Pancreas (tissue), 10 donors: ENCODE measurements at regions of chr10 and their contacts with region 1.

Region 1: GRCh38 chr10:124000792-124001201 is 92.6 kb downstream of the CHST15 start:
- DNase-seq: peak in 1 of 6 donors; percentile 7
- ATAC-seq: no peak
- H3K4me3 ChIP-seq: no peak overlapping the region
- H3K27ac ChIP-seq: no peak overlapping the region
- H3K4me1 ChIP-seq: no peaks in the 10 kb centered on the region
- H3K27me3 ChIP-seq: no peaks in the 10 kb centered on the region
- CTCF ChIP-seq: no peak

Region 2: GRCh38 chr10:124125447-124126116 is 124.8 kb after region 1 on chr10:
- intact Hi-C with region 1: no loop called
- DNase-seq: no peak
- ATAC-seq: peak in 2 of 4 donors; percentile 39
- H3K4me3 ChIP-seq: no peak overlapping the region
- H3K27ac ChIP-seq: no peak overlapping the region
- H3K4me1 ChIP-seq: no peaks in the 10 kb centered on the region
- H3K27me3 ChIP-seq: no peaks in the 10 kb centered on the region
- CTCF ChIP-seq: peak in 1 of 4 donors; percentile 18

Region 3: GRCh38 chr10:124200011-124200410 is 199.2 kb after region 1 on chr10:
- intact Hi-C with region 1: no loop called
- DNase-seq: no peak
- ATAC-seq: no peak
- H3K4me3 ChIP-seq: no peak overlapping the region
- H3K27ac ChIP-seq: no peak overlapping the region
- H3K4me1 ChIP-seq: no peaks in the 10 kb centered on the region
- H3K27me3 ChIP-seq: peaks cover 0 to 3% (median 0%) of the 10 kb centered on the region in 4 donors
- CTCF ChIP-seq: no peak

Region 4: GRCh38 chr10:124378881-124379471 is 378.2 kb after region 1 on chr10:
- intact Hi-C with region 1: loop called in 1 of 3 experiments (anchors 5 kb)
- DNase-seq: no peak
- ATAC-seq: peak in 2 of 4 donors; percentile 16 to 28
- H3K4me3 ChIP-seq: no peak overlapping the region
- H3K27ac ChIP-seq: no peak overlapping the region
- H3K4me1 ChIP-seq: no peaks in the 10 kb centered on the region
- H3K27me3 ChIP-seq: no peaks in the 10 kb centered on the region
- CTCF ChIP-seq: no peak